ENCODE measurements at regions of chr9 and their contacts with region 1.

Region 1: GRCh38 chr9:8857926-8858595 is 1058.5 kb upstream of the DMAC1 start:
- DNase-seq: peak; percentile 52 to 95 (median 88)

Region 2: DNA sequence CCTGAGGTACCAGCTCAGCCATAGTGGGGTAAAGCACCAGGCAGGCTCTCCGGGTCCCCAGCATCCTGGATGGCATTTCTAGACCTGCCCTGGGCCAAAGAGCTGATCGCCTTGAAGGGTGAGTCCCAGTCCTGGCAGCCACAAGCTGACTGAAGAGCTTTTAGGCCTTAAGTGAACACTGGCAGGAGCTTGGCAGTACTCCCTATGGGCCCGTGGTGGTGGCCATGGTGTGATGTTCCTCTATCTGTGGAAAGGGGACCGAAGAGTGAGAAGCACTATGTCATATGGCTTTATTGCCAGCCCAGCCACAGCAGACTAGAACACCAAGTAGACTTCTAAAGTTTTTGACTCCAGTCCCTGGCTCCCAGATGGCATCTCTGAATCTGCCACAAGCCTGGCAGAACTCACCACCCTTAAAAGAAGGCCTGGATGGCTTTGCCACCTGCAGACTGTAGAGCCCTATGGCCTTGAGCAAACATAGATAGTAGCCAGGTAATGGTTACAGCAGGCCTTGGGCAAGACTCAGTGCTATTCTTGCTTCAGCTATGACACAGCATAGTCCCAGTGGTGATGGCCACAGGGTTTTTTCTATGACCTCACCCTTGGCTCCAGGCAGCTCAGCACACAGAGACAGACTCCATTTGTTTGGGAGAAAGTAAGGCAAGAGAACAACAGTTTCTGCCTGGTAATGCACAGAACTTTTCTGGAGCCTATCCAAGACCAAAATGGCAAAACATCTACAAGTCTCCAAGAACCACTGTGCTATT is 257.0 kb before region 1 on chr9:
- intact Hi-C with region 1: loop called (anchors 10 kb)
- DNase-seq: peak in 37 of 42 donors; percentile 16 to 86 (median 58)

Region 3: GRCh38 chr9:8816361-8816760 is 41.7 kb before region 1 on chr9:
- intact Hi-C with region 1: no loop called
- DNase-seq: peak in 12 of 42 donors; percentile 11 to 68 (median 30)

Region 4: DNA sequence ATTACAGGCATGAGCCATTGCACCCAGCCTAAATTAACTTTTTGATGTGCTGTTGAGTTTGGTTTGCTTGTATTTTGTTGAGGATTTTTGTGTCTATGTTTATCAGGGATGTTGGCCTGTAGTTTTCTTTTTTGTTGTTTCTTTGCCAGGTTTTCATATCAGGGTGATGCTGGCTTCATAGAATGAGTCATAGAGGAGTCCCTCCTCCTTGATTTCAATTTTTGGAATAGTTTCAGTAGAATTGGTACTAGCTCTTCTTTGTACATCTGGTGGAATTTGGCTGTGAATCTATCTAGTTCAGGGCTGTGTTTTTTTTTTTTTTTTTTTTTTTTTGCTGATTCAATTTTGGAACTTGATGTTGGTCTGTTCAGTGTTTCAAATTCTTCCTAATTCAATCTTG is 105.8 kb after region 1 on chr9:
- intact Hi-C with region 1: no loop called
- DNase-seq: no peak

Measured in head of caudate nucleus (tissue), 42 donors.